OCI-LY7 (cell line): ENCODE measurements at regions of chr12 and their contacts with region 1.

Region 1: DNA sequence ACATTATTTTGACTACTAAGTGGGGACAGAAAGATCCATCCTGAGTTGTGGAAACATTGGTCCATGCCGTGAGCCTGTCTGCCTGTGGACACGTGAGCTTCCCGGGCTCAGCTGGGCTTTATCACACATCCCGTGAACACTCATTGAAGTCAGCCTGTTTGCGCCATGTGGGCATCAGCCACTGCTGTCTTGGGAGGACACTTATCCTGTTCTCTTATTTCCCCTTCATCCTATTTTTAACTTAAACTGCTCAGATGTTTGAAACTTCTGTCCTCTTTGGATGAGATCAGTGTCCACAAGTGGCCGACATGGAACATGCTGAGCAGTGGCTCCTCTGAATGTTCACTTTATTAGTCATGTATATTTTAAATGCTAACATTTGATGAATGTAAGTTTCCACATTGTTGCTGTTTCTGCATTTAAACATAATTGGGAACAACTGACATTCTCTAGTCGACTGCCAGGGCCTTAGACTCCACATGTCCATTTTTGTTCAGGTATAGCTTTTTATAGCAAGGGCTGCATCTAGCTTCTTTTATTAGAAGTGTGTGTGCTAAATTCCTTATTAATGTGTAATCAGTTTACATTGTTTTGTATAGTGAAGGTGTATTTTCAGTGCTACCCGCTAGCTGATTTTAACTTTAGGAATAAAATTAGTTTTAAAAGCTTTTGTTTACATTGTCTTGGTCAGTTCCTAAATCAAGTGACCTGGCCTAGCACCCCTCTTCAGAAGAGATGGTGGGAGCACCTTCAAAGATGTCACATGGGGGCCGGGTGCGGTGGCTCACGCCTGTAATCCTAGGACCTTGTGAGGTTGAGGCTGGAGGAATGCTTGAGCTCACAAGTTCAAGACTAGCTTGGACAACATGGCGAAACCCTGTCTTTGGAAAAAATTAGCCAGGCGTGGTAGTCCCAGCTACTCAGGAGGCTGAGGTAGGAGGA is 24.0 kb downstream of the RNF34 start:
- DNase-seq: no peak
- H3K4me3 ChIP-seq: no peak overlapping the region
- H3K27ac ChIP-seq: peak overlapping the region; percentile 94
- H3K4me1 ChIP-seq: peaks cover 35% of the 10 kb centered on the region
- CTCF ChIP-seq: no peak

Region 2: DNA sequence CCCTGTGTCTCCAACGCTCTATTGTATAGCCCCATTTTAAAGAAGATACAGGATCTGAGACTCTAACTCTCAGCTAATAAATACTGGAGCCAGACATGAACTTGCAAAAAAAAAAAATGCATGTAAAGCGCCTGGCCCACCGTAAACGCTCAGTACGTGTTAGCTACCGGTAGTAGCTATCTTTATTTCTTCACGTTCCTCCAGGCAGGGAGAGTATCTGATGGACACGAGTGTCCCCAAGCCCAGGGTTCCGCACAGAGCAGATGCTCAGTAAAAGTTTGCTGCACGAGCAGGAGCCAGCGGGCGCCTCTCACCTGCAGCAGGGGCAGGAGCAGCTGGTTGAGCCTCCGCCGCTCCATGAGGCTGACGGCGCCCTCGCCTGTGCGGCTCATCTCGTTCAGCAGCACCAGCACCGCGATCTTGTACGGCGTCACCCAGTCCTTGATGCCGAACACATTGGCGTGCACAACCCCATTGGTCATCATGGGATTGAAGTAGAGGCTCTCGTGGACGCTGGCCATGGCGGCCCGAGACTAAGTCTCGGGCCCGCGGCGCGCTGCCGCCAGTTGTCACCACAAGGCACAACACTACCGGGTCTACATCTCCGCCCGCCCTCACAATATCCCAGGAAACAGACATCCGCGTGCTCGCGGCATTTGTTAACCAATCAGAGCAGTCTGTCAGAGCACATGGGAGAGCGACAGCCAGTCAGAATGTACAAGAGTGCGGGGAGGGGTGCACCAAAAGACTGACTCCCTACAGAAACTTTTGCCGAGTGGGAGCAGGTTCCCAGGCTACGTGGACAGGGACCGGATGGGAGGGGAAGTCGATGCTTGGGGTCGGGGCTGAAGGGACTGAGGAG is 71.9 kb before region 1 on chr12 and contains the start of gene ANAPC5:
- CTCF ChIA-PET with region 1: no interaction called
- POLR2A ChIA-PET with region 1: interaction called, 4 read pairs
- intact Hi-C with region 1: loop called (anchors 2 kb)
- DNase-seq: peak; percentile 98
- H3K4me3 ChIP-seq: peak within 1 kb of the TSS; percentile 80
- H3K27ac ChIP-seq: peak within 1 kb of the TSS; percentile 58
- H3K4me1 ChIP-seq: peaks cover 22% of the 10 kb centered on the region
- CTCF ChIP-seq: peak; percentile 22; the same call in 1 of the 2 replicates
- total RNA-seq, gene ANAPC5: 191 and 217 TPM in 2 replicates

Region 3: DNA sequence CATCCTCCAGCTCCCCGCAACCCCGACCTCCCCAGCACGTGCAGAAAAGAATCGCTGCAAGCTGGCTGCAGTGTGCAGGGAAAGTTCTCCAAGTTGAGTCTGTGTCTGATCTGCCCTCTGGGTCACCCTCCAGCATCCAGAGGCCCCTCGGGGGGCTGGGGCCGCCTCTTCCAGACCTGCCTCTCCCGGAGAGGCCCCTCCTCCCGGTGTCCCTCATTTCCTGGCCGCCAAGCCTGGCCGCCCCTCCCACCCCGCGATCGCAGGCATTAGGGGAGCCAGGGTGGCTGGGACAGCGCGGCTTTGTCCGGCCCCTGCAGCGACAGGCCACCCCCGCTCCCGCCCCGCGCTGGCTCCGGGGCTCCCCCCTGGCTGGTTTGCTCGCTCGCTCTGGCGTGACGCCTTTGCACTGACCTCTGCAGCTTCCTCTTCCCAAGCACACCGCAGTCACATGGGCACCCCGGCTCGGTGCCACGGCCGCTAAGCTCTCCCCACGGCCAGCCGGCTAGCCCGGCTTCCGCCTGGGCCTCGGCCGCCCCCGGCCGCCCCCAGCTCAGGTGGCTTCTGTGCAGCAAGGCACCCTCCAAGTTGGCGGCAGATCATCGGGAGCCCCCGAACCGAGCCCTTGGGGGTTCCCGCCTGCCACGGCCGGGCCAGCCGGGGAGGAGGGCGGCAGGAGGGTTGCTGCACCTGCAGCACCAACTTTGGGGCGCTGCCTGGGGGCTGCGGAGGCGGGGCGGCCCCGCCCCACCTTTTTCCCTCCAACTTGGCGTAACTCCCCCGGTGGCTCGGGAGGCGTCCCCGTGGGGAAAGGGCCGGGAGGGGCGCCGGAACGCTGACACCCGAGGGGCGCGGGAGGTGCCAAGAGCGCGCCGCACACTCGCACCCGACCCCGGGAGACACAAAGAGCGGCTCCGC is 113.2 kb after region 1 on chr12:
- CTCF ChIA-PET with region 1: no interaction called
- POLR2A ChIA-PET with region 1: no interaction called
- intact Hi-C with region 1: no loop called
- DNase-seq: peak; percentile 89
- H3K4me3 ChIP-seq: peak overlapping the region; percentile 73
- H3K27ac ChIP-seq: peak overlapping the region; percentile 93
- H3K4me1 ChIP-seq: peaks cover 48% of the 10 kb centered on the region
- CTCF ChIP-seq: 0 out of 2 replicates have a peak, but pooled peaks have one; percentile 14

Region 4: DNA sequence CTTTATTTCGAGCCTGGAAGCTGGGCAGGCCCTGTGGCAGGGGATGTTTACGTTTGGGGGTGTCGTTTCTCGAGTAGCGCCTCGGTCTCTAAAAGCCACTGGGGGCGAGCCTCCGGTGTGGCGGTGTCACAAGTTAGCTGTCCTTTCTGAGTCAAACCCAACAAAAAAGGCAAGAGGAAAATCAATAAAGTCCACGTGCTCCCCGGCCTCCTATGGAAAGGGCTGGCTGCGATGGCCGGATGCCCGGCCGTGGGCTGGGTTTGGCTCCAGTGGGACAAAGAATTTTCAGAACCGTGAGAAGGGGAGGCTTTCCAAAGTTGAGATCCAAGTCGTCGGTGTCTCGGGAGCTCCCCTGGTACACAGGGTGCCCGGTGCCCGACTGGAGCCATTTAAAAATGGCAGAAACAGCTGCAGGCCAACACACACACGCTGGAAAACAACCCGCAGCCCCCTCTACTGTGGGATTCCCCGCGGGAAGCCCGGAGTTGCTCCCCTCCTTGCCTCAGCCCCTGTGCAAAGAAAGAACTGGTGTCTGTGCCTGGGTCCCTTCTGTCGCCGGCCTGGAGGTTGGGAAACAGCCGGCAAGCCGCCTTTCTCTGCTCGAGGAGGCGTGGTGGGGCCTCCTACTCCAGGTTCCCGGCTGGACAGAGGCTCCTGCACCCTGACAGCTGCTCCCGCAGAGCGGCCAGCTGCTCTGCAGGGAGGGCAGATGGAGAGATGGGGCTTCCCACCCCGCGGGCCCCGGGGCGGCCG is 599.6 kb after region 1 on chr12:
- CTCF ChIA-PET with region 1: no interaction called
- POLR2A ChIA-PET with region 1: no interaction called
- intact Hi-C with region 1: no loop called
- DNase-seq: peak; percentile 62
- H3K4me3 ChIP-seq: peak overlapping the region; percentile 95
- H3K27ac ChIP-seq: peak overlapping the region; percentile 94
- H3K4me1 ChIP-seq: peaks cover 72% of the 10 kb centered on the region
- CTCF ChIP-seq: no peak